Activated CD4-positive, alpha-beta T cell treated with anti-CD3 and anti-CD28 coated beads, Interleukin-2, amount 10 ng/mL, durations not matched to agents 7 days and 5 days (primary cell): ENCODE measurements at regions of chr16 and their contacts with region 1.

Region 1: DNA sequence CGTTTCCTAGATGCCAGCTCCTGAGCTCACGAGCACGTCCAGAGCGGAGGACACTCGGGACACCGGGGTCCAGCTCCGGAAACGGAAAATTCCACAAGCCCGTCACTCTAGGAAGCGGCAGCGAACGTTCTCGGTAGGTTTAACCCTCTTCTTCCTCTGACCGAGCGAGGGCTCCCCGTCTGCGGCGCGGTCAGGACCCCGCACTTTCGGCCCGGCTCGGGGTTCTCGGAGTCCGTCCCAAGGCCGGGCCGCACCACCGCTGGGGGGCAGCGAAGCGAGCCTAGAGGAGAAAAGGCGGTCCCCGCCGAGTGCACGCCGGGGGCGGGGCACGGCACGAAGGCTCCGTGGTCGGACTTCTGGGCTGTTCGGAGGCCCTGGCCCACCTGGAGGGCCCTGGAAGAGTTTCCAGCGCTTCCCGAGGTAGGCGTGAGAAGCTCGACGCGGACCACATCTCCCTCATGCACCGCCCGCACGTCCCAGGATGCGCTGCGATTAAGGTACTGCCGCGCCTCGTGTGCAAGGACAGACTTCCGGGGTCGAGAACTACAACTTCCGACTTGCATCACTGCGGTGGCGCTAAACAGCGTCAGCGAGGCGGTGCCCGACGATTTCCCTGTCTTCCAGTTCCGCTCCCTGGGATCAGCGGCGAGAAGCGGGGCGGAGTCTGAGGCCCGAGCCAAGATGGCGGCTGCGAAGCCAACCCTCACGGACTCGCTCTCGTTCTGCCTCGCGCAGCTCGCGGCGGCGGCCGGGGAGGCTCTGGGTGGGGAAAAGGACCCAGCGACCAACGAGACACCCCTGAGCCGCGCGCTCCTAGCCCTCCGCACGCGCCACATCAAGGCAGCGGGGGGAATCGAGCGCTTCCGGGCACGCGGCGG is at the start of gene ARMC5:
- DNase-seq: peak; percentile 98
- H3K4me3 Mint-ChIP-seq: peak within 1 kb of the TSS; percentile 92
- H3K27ac Mint-ChIP-seq: peak within 1 kb of the TSS; percentile 98
- H3K4me1 Mint-ChIP-seq: peaks cover 48% of the 10 kb centered on the region
- H3K27me3 Mint-ChIP-seq: no peaks in the 10 kb centered on the region
- total RNA-seq, gene ARMC5: 11.4 to 12.3 TPM

Region 2: DNA sequence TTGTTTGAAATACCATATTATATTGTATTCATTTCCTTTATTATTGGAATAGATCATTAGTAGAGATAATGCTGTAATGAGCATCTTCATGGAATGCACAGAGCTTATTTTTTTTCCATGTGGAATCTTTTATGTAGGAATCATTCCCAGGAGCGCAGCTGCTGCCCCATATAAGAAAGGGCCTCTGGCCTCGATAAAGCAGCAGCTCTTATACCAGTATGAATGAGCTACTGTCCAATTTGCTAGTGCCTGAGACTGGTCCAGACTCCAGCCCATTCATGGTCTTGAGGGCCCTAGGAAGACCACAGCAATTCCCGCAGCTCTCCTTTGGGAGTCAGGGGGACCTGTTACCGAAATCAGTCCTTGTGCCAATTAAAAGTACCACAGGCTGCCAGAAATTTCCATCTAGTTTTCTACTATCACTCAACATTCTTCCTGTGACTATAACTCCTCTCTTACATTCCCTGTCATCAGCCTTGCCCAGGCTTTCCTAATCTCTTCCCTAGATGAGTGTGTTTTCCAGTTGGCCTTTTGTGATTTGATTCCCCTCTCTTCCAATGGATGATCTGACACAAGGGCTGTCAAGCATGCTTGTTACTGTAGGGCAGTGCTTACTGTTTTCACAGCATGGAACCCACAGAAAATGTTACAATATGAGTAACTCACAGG is 18.4 kb before region 1 on chr16:
- CTCF ChIA-PET with region 1: interaction called, 23 read pairs
- POLR2A ChIA-PET with region 1: no interaction called
- DNase-seq: no peak
- H3K4me3 Mint-ChIP-seq: no peak overlapping the region
- H3K27ac Mint-ChIP-seq: no peak overlapping the region
- H3K4me1 Mint-ChIP-seq: peaks cover 19% of the 10 kb centered on the region
- H3K27me3 Mint-ChIP-seq: peaks cover 1% of the 10 kb centered on the region

Region 3: DNA sequence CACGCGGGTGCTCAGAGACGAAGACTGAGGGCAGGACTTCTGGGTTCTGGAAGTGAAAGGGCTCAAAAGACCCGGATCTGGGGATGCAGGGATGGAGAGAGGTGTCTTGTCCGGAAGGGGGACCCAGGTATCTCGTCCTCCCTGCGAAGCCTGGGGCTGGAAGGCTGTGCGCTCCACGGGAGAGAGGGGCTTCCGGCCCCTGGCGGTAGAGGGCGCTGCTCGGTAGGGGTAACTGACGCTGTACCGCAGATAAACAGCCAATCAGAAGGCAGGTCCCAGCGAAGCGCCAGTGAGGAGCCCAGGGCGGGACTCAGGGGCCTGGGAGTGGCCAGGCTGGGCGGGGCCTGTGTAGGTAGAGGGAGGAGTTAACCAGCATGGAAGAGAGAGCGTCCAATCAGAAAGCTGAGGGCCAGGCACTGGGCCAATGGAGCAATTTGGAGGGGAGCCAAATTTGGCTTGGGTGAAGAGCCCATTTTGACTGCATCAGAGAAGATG is 13.7 kb after region 1 on chr16:
- CTCF ChIA-PET with region 1: interaction called, 33 read pairs
- POLR2A ChIA-PET with region 1: no interaction called
- DNase-seq: peak; percentile 20
- H3K4me3 Mint-ChIP-seq: peak overlapping the region; percentile 61
- H3K27ac Mint-ChIP-seq: no peak overlapping the region
- H3K4me1 Mint-ChIP-seq: peaks cover 22% of the 10 kb centered on the region
- H3K27me3 Mint-ChIP-seq: peaks cover 41% of the 10 kb centered on the region

Region 4: DNA sequence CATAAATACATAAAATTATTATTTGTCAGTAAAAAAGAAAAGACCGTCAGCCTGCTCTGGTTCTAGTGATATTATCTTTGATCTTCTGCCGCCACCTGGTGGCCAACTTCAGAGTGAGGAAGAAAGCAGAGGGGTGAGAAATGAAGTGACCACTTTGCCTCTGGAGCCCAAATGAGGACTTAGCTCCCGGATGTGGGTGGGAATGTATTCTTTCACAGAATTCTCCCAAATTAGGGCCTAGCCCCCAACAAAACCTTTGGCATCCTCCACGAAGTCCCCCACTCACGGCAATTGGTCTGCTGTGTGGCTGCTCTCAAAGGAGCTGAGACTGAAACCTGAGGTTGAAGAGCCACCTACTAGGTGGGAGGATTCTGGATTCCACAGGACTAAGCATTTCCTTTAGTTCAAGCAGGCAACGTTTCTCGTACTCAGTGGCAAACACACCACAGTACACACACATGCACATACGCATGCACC is 409.6 kb after region 1 on chr16:
- CTCF ChIA-PET with region 1: interaction called, 16 read pairs
- POLR2A ChIA-PET with region 1: no interaction called
- DNase-seq: peak; percentile 87
- H3K4me3 Mint-ChIP-seq: peak overlapping the region; percentile 38
- H3K27ac Mint-ChIP-seq: peak overlapping the region; percentile 84
- H3K4me1 Mint-ChIP-seq: peaks cover 70% of the 10 kb centered on the region
- H3K27me3 Mint-ChIP-seq: no peaks in the 10 kb centered on the region